Activated B cell treated with CpG ODN at 0.5 μM for 24 hours (primary cell): ENCODE measurements at regions of chr17 and their contacts with region 1.

Region 1: DNA sequence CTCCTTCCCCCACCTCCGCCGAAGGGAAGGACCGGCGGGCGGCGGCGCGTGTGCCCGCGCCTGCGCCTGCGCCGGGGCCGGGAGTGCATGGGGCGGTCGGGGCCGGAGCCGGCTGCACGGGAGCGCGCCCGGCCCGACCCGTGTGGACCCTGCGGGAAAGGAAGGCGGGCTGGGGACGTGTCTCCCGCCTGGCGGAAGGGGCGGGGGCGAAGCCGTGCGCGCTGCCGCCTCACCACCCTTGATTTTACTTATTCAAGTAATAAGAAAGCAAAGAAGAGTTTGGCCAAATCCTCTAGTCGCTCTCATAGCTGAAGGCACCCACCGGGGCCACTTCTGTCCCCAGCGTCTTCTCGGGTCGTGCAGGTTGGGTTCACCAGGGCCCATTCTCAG is 596 bp upstream of the PFN1 start:
- DNase-seq: peak; percentile 74
- ATAC-seq: peak; percentile 45
- H3K4me3 Mint-ChIP-seq: peak overlapping the region; percentile 100
- H3K27ac Mint-ChIP-seq: peak overlapping the region; percentile 100
- H3K4me1 Mint-ChIP-seq: peaks cover 44% of the 10 kb centered on the region
- H3K27me3 Mint-ChIP-seq: peaks cover 2% of the 10 kb centered on the region
- CTCF ChIP-seq: no peak

Region 2: DNA sequence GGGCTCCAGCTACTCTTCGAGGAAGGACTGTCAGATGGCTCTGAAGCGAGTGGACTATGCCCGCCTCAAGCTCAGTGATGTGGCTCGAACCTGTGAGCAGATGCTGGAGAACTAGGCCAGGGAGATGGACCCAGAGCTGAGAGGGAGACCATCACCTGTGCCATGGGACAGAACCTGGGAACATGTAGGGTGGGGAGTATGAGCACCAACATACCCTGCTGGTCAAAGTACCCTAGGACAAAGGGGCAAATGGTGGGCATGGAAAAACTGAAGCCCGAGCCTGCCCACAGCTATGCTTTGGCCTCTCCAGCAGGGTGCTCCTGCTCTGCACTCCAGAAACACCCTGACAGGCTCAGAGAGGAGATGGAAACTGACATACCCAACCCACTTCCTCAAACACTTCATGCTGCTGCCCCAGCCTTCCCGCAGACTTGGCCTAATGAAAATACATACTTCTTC is 215.8 kb before region 1 on chr17:
- CTCF ChIA-PET with region 1: no interaction called
- POLR2A ChIA-PET with region 1: no interaction called
- intact Hi-C with region 1: loop called (anchors 5 kb)
- DNase-seq: peak; percentile 49
- ATAC-seq: peak; percentile 65
- H3K4me3 Mint-ChIP-seq: peak overlapping the region; percentile 70
- H3K27ac Mint-ChIP-seq: peak overlapping the region; percentile 90
- H3K4me1 Mint-ChIP-seq: peaks cover 54% of the 10 kb centered on the region
- H3K27me3 Mint-ChIP-seq: no peaks in the 10 kb centered on the region
- CTCF ChIP-seq: no peak

Region 3: DNA sequence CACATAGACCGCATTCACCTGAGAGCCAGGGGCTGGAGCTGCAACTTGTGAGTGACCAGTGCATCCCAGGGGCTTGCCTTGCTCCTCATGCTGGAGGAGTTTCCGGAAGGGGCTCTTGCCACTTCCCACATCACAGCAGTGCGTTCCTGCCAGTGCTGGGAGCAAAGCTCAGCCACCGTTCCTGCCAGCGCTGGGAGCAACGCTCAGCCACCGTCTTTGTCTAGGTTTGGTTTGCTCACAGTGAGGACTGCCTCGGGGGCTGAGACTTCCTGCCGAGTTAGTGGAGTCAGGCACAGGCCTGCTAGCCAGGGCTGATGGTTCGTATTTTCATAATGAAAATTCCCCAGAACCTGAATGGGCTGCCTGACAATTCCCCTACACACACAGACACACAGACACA is 40.6 kb before region 1 on chr17:
- CTCF ChIA-PET with region 1: interaction called, 3 read pairs
- POLR2A ChIA-PET with region 1: interaction called, 7 read pairs
- intact Hi-C with region 1: loop called (anchors 2 kb)
- DNase-seq: no peak
- ATAC-seq: no peak
- H3K4me3 Mint-ChIP-seq: no peak overlapping the region
- H3K27ac Mint-ChIP-seq: no peak overlapping the region
- H3K4me1 Mint-ChIP-seq: peaks cover 4% of the 10 kb centered on the region
- H3K27me3 Mint-ChIP-seq: peaks cover 2% of the 10 kb centered on the region
- CTCF ChIP-seq: no peak

Region 4: GRCh38 chr17:4980644-4981216 is 31.8 kb after region 1 on chr17:
- CTCF ChIA-PET with region 1: interaction called, 3 read pairs
- POLR2A ChIA-PET with region 1: interaction called, 21 read pairs
- intact Hi-C with region 1: no loop called
- DNase-seq: no peak
- ATAC-seq: peak; percentile 68
- H3K4me3 Mint-ChIP-seq: peak overlapping the region; percentile 2
- H3K27ac Mint-ChIP-seq: peak overlapping the region; percentile 37
- H3K4me1 Mint-ChIP-seq: peaks cover 41% of the 10 kb centered on the region
- H3K27me3 Mint-ChIP-seq: no peaks in the 10 kb centered on the region
- CTCF ChIP-seq: peak; percentile 55

Region 5: GRCh38 chr17:4997302-4998026 is 48.5 kb after region 1 on chr17 and contains the starts of genes INCA1 and KIF1C:
- CTCF ChIA-PET with region 1: no interaction called
- POLR2A ChIA-PET with region 1: interaction called, 36 read pairs
- intact Hi-C with region 1: loop called (anchors 1 kb)
- DNase-seq: peak; percentile 95
- ATAC-seq: peak; percentile 95
- H3K4me3 Mint-ChIP-seq: peak within 1 kb of the TSS; percentile 85
- H3K27ac Mint-ChIP-seq: peak within 1 kb of the TSS; percentile 90
- H3K4me1 Mint-ChIP-seq: peaks cover 20% of the 10 kb centered on the region
- H3K27me3 Mint-ChIP-seq: no peaks in the 10 kb centered on the region
- CTCF ChIP-seq: no peak
- total RNA-seq, gene INCA1: 0.17 and 0.44 TPM in 2 replicates
- total RNA-seq, gene KIF1C: 62.6 and 63.8 TPM in 2 replicates

Region 6: DNA sequence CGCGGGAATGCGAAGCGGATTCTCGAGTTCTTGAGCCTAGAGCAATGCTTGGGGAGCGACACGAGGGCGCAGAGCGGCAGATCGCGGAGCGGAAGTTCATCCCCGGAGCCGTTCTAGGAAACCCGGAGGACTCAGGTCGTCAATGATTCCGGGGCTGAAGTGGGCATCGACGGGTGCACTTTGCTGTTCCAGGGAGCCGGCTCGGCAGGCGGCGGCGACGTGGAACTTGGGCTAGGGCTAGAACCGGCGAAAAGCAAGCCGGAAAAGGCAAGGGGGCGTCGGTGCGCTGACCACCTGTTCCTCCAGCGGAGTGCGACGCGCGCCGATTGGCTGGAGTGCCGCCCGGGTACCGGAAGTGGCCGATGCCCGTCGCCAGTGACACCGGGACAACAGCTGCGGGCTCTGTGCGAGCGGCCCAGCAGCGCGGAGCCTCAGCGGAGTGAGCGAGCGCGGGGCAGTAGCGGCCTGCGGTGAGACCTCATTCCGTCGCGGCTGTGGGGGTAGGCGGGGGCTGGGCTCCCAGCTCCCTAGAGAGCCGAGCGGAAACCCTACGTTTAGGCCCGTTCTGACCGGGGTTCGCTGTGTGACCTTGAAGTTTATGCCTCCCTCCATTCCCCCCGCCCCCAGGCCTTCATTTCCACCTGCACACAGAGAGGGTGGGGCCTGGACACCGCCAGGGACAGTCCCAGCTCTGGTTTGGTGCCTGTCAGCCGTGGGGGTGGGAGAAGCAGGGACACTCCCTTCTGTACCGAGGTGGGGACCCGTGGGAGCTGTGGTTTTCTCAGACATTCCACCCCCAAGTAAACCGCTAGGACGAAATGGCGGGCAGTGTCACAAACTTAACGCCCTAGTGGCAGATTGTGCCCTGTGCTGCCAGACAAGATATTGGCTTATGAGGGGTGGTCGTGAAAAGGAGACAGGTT is 129.4 kb after region 1 on chr17 and contains the start of gene ZFP3:
- CTCF ChIA-PET with region 1: no interaction called
- POLR2A ChIA-PET with region 1: interaction called, 22 read pairs
- intact Hi-C with region 1: no loop called
- DNase-seq: peak; percentile 80
- ATAC-seq: peak; percentile 88
- H3K4me3 Mint-ChIP-seq: peak within 1 kb of the TSS; percentile 83
- H3K27ac Mint-ChIP-seq: peak within 1 kb of the TSS; percentile 96
- H3K4me1 Mint-ChIP-seq: peaks cover 31% of the 10 kb centered on the region
- H3K27me3 Mint-ChIP-seq: no peaks in the 10 kb centered on the region
- CTCF ChIP-seq: no peak
- total RNA-seq, gene ZFP3: 10.1 and 11.5 TPM in 2 replicates